Vagina (tissue), 2 donors: ENCODE measurements at regions of chr5 and their contacts with region 1.

Region 1: DNA sequence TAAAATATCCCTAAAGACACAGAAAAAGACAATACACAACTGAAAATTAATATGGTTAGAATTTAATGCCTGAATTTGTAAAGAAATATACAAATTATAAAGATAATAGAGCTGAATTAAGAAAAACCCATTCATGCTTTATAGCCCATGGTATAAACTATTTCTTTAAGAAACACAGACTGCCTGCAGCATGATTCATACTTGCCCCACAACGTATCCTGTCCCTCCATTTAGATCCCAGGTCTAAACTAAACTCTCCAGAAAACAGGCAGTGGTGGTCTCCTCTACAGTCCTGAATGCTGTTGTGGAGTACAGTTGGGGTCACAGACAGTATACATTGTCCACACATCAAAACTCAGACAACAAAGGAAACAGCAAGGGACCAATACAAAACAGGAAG is 24.8 kb downstream of the IL6ST start:
- DNase-seq: no peak
- H3K4me3 ChIP-seq: no peak overlapping the region
- H3K27ac ChIP-seq: no peak overlapping the region
- H3K4me1 ChIP-seq: peaks cover 53% of the 10 kb centered on the region
- H3K27me3 ChIP-seq: no peaks in the 10 kb centered on the region
- CTCF ChIP-seq: no peak
- POLR2A ChIP-seq: no peak

Region 2: DNA sequence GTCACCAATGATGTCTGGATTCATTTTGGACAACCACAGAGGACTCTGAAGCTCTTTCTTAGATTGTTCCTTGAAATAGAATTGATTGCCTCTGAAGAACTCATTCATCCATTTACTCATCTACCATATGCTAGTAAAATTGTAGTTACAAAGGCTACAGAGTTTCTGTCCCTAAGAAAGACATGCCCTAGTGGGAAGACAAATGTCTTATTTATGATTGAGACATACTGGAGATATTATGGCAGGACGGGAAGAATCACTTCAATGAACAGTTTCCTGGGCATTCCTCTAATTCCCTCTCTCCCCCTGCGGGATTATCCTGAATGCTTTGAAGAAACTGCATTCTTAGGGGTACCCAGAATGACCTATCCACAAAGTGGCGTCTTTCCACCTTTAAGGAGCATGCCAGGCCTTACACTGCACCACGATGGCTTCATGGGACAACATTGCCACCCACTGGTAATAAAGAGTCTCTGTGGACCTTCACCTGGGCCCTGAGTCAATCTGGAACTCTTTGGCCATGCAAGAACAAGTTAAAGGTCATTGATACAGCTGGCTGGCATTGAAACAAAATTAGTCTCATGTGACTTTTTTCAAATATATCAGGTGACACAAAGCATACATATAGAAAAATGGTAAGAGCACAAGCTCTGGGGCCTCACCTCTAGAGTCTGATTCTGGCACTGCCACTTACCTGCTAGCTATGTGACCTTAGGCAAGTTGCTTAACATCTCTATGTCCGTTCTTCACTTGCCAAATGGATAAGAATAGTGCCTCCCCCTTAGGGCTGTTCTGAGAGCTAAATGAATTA is 231.1 kb after region 1 on chr5:
- intact Hi-C with region 1: loop called (anchors 10 kb)
- DNase-seq: no peak
- H3K4me3 ChIP-seq: no peak overlapping the region
- H3K27ac ChIP-seq: no peak overlapping the region
- H3K4me1 ChIP-seq: no peaks in the 10 kb centered on the region
- H3K27me3 ChIP-seq: no peaks in the 10 kb centered on the region
- CTCF ChIP-seq: peak; percentile 62 to 82 (median 65)
- POLR2A ChIP-seq: no peak